ENCODE measurements at regions of chr4 and their contacts with region 1.

Region 1: GRCh38 chr4:29278585-29278984 is 1441.6 kb upstream of the PCDH7 start:
- DNase-seq: peak; percentile 68
- ATAC-seq: peak; percentile 72
- H3K4me3 ChIP-seq: 0 out of 2 replicates have a peak overlapping the region, but pooled peaks have one; percentile 4
- H3K27ac ChIP-seq: peak overlapping the region; percentile 97
- H3K4me1 ChIP-seq: peaks cover 36% of the 10 kb centered on the region
- H3K27me3 ChIP-seq: no peaks in the 10 kb centered on the region
- CTCF ChIP-seq: no peak

Region 2: DNA sequence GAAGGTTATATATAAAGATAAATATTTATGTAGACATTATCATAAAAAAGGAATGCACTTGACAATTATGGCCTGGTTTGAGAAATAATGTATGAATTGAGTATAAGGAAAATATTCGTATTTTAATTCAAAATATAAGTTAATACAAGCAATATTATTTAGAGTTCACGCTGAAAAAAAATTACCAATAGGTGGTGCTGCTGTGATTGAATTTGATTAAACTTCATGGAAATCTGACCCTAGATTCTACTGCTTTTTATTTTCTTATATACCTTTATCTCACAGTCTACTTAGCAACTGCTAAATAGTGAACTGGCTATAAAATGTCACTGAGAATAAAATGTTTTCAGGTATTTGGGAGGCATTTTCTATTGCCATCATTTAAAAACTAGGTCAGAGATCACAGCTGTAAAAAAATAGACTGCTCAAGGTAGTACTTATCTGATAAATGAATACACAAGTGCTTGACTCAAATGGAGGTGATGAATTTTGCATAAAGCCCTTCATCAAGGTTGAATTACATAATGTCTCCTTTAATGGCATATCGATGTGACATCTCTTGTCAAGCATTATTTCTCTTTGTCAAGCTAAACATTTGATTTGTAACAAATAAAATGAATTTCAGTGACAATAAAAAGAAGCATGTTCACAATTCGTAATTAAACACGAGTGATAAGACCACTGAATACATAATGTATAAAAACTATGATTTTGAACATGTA is 197.2 kb before region 1 on chr4:
- CTCF ChIA-PET with region 1: no interaction called
- POLR2A ChIA-PET with region 1: no interaction called
- intact Hi-C with region 1: loop called (anchors 10 kb)
- DNase-seq: peak; percentile 54
- ATAC-seq: peak; percentile 33
- H3K4me3 ChIP-seq: no peak overlapping the region
- H3K27ac ChIP-seq: no peak overlapping the region
- H3K4me1 ChIP-seq: peaks cover 13% of the 10 kb centered on the region
- H3K27me3 ChIP-seq: no peaks in the 10 kb centered on the region
- CTCF ChIP-seq: peak; percentile 59

Region 3: GRCh38 chr4:29213020-29213419 is 65.6 kb before region 1 on chr4:
- CTCF ChIA-PET with region 1: no interaction called
- POLR2A ChIA-PET with region 1: no interaction called
- intact Hi-C with region 1: loop called (anchors 1 kb)
- DNase-seq: peak; percentile 66
- ATAC-seq: peak; percentile 70
- H3K4me3 ChIP-seq: no peak overlapping the region
- H3K27ac ChIP-seq: peak overlapping the region; percentile 73
- H3K4me1 ChIP-seq: peaks cover 13% of the 10 kb centered on the region
- H3K27me3 ChIP-seq: no peaks in the 10 kb centered on the region
- CTCF ChIP-seq: no peak

Region 4: DNA sequence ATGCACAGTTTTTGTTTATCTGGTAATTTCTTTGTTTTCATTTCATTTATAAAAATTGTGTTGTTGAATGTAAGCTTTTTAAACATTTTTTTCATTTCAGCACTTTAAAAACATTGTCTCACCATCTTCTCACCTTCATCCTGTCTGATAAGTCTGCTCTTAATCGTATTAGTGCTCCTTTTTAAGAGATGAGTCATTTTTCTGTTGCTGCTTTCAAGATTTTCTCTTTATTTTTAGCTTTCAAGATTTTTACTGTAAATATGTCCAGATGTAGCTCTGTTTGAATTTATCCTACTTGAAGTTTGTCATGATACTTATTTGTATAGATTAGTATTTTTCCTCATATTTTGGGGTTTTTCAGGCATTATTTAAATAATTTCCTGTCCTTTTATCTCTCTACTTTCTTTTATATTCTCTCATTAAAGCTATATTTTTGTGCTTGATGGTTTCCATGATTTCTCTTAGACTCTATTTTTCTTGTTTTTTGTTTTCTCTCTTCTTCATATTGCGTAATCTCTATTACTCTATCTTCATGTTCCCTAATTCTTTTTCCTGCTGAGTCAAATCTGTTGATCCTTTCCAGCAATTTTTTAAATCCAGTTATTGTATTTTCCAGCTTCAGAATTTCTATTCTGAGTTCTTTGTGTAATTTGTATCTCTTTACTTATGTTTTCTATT is 41.2 kb after region 1 on chr4:
- CTCF ChIA-PET with region 1: no interaction called
- POLR2A ChIA-PET with region 1: no interaction called
- intact Hi-C with region 1: loop called (anchors 5 kb)
- DNase-seq: no peak
- ATAC-seq: no peak
- H3K4me3 ChIP-seq: no peak overlapping the region
- H3K27ac ChIP-seq: no peak overlapping the region
- H3K4me1 ChIP-seq: no peaks in the 10 kb centered on the region
- H3K27me3 ChIP-seq: no peaks in the 10 kb centered on the region
- CTCF ChIP-seq: no peak

Measured in PC-3 (cell line).